ENCODE measurements at regions of chr1 and their contacts with region 1.

Region 1: GRCh38 chr1:237542525-237543418 is 347.9 kb downstream of the ZP4 start:
- ATAC-seq: peak in 6 of 8 experiments; percentile 23 to 85 (median 54)
- H3K4me3 ChIP-seq: no peak overlapping the region
- H3K27ac ChIP-seq: no peak overlapping the region
- H3K4me1 ChIP-seq: peaks cover 0 to 5% of the 10 kb centered on the region in 2 donors

Region 2: DNA sequence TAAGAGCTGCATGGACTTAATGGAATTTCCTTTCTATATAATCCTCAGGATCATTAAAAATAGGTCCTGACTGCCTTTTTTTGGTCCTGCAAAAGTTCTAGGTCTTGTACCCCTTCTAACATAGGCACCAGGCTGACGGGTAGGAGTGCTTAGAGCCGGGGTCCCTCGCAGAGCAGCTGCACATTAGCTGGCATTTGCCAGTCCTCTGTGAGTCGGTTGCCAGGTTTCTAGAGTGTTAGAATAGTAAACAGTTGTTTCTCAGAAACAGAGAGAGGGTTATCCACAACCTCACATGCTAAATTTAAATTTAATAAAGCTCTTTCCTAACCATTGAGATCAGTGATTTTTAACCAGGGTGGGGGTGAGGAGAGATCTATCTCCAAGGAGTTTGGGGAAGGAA is 903.1 kb before region 1 on chr1:
- in situ Hi-C with region 1: loop called in 1 of 9 experiments (anchors 25 kb)
- ATAC-seq: peak in 1 of 8 experiments; percentile 81
- H3K4me3 ChIP-seq: no peak overlapping the region
- H3K27ac ChIP-seq: no peak overlapping the region
- H3K4me1 ChIP-seq: no peaks in the 10 kb centered on the region

Region 3: DNA sequence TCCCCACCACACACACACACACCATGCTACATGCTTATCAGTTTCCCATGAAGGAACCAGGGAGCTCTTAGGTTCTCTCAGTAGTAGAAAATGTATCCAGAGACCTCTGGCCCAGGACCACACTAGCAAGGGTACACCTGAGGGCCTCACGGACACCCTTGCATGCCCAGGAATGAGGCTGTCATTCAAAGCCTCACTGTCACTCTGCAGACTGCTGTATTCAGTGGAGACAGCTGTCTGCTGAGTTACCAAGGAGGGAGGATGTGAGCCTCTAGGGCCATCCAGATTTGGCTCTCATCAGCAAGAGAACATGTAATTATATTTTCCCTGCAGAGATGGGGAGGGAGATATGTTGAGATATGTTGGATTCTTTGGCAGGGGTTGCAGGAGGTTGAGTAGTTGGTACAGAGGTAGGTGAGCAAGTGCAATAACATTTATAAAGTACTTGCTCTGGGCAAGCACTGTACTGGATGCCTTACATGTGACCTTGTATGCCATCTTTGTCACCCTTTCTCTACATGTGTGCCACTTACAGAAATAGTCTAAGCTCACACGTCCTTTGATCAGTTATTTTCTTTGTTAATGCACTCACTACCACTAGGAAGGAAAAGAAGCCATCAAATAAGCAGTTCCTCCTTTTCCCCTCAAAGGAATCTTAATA is 97.4 kb after region 1 on chr1:
- in situ Hi-C with region 1: no loop called
- ATAC-seq: no peak
- H3K4me3 ChIP-seq: no peak overlapping the region
- H3K27ac ChIP-seq: no peak overlapping the region
- H3K4me1 ChIP-seq: no peaks in the 10 kb centered on the region

Measured in motor neuron (in vitro differentiated cells).